MCF 10A (cell line): ENCODE measurements at regions of chrX and their contacts with region 1.

Region 1: GRCh38 chrX:45843518-45843917 is 642.8 kb upstream of the DIPK2B start:
- DNase-seq: peak; percentile 46
- H3K4me3 Mint-ChIP-seq: no peak overlapping the region
- H3K27ac Mint-ChIP-seq: no peak overlapping the region
- H3K4me1 Mint-ChIP-seq: peaks cover 14% of the 10 kb centered on the region
- H3K27me3 Mint-ChIP-seq: peaks cover 20% of the 10 kb centered on the region
- CTCF ChIP-seq: peak; percentile 23

Region 2: DNA sequence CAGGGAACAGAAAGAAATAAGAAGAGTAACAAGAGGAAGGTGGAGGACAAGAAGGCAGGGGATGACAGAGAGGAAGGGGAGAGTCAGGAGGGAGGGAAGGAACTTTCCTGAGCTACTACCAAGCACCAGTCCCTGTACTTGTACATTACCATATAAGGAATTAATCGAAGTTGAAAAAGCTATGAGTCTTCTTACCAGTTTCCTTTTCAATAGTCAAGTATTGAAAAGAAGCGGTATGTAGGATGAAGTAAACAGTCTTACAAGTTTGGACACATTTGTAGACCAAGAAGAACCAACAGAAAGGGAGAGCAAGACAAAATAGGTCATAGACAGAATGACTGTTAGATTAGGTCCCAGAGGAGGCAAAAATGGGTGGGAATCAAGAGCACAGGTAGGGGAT is 13.2 kb before region 1 on chrX:
- CTCF ChIA-PET with region 1: interaction called, 4 read pairs
- POLR2A ChIA-PET with region 1: interaction called, 13 read pairs
- intact Hi-C with region 1: loop called (anchors 2 kb)
- DNase-seq: no peak
- H3K4me3 Mint-ChIP-seq: no peak overlapping the region
- H3K27ac Mint-ChIP-seq: peak overlapping the region; percentile 39
- H3K4me1 Mint-ChIP-seq: peaks cover 21% of the 10 kb centered on the region
- H3K27me3 Mint-ChIP-seq: peaks cover 59% of the 10 kb centered on the region
- CTCF ChIP-seq: no peak

Region 3: GRCh38 chrX:46376246-46376885 is 532.8 kb after region 1 on chrX:
- CTCF ChIA-PET with region 1: interaction called, 18 read pairs
- POLR2A ChIA-PET with region 1: no interaction called
- intact Hi-C with region 1: no loop called
- DNase-seq: peak; percentile 55
- H3K4me3 Mint-ChIP-seq: no peak overlapping the region
- H3K27ac Mint-ChIP-seq: no peak overlapping the region
- H3K4me1 Mint-ChIP-seq: no peaks in the 10 kb centered on the region
- H3K27me3 Mint-ChIP-seq: peaks cover 77% of the 10 kb centered on the region
- CTCF ChIP-seq: peak; percentile 44